ENCODE measurements at regions of chr18 and their contacts with region 1.

Region 1: DNA sequence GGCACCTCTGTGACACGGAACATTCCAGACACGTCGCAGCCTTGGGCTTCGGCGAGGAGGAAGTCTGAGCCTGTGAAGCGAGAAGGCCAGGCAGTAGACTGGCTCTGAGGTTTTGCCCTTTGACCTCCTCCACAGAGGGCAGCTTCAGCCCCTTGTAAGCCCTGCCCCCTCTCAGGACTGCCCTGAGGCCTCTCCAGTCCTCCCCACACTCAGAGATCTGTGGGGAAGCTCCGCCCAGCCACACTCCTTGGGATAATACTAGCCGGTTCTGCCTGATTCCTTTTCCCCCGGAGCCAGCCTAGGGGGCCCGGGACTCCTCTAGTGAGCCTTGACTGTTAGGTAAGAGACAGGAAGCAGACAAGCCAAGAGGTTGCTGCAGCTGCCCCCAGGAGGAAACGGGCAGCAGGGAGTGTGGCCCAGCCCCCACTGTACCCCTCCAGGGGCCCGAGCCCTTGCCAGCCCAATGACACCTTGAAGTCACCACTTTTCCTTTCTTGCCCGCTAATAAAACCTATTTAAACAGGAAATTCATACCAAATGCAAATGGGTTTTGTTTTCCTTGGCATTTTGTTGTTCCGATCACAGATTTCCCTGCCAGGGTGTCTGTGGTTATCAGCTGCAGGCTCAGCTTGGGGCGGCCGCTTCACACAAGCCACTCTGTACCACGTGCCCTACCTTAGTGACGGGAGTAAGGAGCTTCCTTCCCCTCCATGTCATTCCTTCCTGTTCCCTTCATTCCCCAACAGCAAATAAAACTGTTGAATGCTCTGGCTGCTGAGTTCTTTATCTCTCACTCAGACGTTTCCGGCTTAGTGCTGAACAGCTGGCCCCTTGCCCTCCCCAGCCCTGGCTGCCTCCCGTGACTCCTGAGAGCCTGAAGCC is 124.7 kb downstream of the CABLES1 start:
- DNase-seq: peak; percentile 76 to 85 (median 81)
- ATAC-seq: peak; percentile 76 to 90 (median 83)
- H3K4me3 ChIP-seq: peak overlapping the region in 10 of 12 donors; percentile 16 to 47 (median 26)
- H3K27ac ChIP-seq: peak overlapping the region; percentile 25 to 86 (median 67)
- H3K4me1 ChIP-seq: peaks cover 8 to 40% (median 20%) of the 10 kb centered on the region in 12 donors
- H3K27me3 ChIP-seq: no peaks in the 10 kb centered on the region
- CTCF ChIP-seq: no peak
- POLR2A ChIP-seq: no peak

Region 2: DNA sequence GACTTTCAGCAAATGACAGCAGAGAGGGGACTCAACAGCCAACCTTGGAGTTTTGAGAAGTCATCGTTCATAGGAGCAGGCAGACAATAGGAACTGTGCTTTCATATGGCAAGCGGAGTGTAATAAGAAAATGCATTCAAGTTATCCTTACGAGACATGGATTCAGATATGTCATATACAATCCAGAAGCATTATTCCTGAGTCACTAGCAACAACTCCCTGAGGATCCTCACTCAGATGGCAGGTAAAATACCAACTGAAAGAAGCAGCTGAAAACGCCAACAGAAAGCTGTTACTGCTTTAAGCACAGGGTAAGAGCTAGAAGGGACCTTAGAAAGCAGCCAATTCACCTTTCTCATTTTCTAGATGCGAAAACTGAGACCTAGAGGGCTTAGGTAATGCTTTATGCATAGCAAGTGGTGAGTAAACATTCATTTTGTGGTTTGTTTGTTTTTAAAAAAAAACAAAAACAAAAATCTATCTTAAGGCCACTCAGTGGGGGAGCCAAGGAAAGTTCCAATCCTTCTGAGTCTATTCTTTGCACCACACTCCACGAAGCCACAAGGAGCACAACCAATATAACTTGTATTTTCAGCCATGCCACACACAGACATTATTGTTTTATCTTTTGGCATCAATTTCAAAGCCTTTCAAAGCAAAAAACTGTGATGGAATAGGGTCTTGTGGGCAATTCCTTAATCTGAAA is 104.1 kb after region 1 on chr18:
- intact Hi-C with region 1: loop called in 1 of 10 experiments (anchors 5 kb)
- DNase-seq: no peak
- ATAC-seq: no peak
- H3K4me3 ChIP-seq: no peak overlapping the region
- H3K27ac ChIP-seq: no peak overlapping the region
- H3K4me1 ChIP-seq: peaks cover 0 to 20% (median 2%) of the 10 kb centered on the region in 12 donors
- H3K27me3 ChIP-seq: no peaks in the 10 kb centered on the region
- CTCF ChIP-seq: no peak
- POLR2A ChIP-seq: no peak